Activated CD8-positive, alpha-beta T cell treated with anti-CD3 and anti-CD28 coated beads, Interleukin-2, amount 10 ng/mL, durations not matched to agents 7 days and 5 days (primary cell): ENCODE measurements at regions of chr21 and their contacts with region 1.

Region 1: DNA sequence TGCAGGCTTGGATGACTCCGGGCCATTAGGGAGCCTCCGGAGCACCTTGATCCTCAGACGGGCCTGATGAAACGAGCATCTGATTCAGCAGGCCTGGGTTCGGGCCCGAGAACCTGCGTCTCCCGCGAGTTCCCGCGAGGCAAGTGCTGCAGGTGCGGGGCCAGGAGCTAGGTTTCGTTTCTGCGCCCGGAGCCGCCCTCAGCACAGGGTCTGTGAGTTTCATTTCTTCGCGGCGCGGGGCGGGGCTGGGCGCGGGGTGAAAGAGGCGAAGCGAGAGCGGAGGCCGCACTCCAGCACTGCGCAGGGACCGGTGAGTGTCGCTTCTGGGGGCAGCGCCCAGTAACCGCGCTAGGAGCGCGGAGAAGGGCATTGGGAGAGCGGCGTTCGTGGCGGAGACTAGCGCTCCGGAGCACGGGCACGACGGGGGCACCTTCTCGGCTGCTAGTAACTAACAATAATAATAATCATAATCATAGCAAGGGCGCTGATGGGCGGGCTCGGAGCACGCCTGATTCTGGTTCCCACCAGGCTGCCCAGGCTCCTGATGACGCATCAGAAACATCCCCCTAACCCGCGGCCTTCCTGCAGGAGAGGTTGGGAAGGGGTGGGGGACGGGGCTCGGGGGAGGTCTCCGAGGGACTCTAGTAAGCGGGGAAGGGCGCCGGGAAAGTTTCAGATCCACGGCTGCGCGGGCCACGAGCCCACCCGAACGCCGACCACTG is at the start of gene MX1:
- DNase-seq: peak; percentile 96
- ATAC-seq: peak; percentile 94
- H3K4me3 Mint-ChIP-seq: peak within 1 kb of the TSS; percentile 94
- H3K27ac Mint-ChIP-seq: peak within 1 kb of the TSS; percentile 100
- H3K4me1 Mint-ChIP-seq: peaks cover 83% of the 10 kb centered on the region
- H3K27me3 Mint-ChIP-seq: no peaks in the 10 kb centered on the region
- total RNA-seq, gene MX1: 563 to 584 TPM

Region 2: DNA sequence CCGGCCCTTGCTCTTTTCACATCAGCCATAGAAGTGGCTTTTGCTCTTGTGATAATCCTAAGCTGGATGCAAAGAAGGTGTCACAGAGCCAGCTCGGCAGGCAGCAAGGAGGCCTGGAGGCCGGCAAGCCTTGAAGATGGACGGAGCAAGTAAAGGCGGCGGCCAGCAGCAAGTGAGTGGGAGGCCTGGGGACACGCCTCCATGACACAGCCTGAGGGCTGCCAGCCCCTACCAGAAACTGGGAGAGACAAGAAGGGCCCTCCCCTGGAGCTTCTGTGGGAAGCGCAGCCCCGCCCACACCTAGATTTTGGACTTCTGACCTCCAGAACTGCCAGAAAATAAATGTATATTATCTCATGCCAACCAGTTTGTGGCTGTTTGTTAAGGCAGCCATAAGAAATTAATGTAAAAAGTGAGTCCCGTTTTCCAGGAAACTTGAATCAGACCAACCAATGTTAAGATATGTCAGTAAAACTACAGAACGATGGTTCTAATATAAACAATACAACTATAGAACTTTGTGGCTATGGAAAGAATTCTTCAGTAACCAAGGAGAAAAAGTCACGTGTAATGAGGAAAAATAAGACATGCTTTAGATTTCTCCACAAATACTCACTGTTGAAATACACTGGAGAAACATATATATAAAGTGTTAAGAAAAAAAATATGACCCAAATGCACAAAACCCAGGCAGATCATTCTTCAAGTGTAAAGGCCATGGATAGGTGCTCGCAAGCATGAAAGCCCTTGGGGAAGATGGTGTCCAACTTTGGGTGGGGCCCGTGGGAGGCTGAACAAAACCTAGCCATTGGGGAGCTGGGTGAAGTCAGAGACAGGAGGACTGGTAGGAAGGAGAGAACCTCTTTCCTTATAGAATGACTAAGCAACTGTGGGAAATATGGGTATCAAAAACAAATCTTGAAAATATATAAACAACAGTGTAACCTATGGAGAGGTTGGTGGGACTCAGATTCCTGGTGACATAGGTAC is 208.1 kb before region 1 on chr21:
- CTCF ChIA-PET with region 1: no interaction called
- POLR2A ChIA-PET with region 1: no interaction called
- DNase-seq: no peak
- ATAC-seq: no peak
- H3K4me3 Mint-ChIP-seq: no peak overlapping the region
- H3K27ac Mint-ChIP-seq: no peak overlapping the region
- H3K4me1 Mint-ChIP-seq: peaks cover 2% of the 10 kb centered on the region
- H3K27me3 Mint-ChIP-seq: peaks cover 14% of the 10 kb centered on the region

Region 3: GRCh38 chr21:41361786-41362604 is 64.1 kb before region 1 on chr21 and contains the start of gene MX2:
- CTCF ChIA-PET with region 1: interaction called, 3 read pairs
- POLR2A ChIA-PET with region 1: interaction called, 178 read pairs
- DNase-seq: peak; percentile 91
- ATAC-seq: peak; percentile 84
- H3K4me3 Mint-ChIP-seq: peak within 1 kb of the TSS; percentile 89
- H3K27ac Mint-ChIP-seq: peak within 1 kb of the TSS; percentile 100
- H3K4me1 Mint-ChIP-seq: peaks cover 76% of the 10 kb centered on the region
- H3K27me3 Mint-ChIP-seq: no peaks in the 10 kb centered on the region
- total RNA-seq, gene MX2: 56.0 to 58.6 TPM

Region 4: DNA sequence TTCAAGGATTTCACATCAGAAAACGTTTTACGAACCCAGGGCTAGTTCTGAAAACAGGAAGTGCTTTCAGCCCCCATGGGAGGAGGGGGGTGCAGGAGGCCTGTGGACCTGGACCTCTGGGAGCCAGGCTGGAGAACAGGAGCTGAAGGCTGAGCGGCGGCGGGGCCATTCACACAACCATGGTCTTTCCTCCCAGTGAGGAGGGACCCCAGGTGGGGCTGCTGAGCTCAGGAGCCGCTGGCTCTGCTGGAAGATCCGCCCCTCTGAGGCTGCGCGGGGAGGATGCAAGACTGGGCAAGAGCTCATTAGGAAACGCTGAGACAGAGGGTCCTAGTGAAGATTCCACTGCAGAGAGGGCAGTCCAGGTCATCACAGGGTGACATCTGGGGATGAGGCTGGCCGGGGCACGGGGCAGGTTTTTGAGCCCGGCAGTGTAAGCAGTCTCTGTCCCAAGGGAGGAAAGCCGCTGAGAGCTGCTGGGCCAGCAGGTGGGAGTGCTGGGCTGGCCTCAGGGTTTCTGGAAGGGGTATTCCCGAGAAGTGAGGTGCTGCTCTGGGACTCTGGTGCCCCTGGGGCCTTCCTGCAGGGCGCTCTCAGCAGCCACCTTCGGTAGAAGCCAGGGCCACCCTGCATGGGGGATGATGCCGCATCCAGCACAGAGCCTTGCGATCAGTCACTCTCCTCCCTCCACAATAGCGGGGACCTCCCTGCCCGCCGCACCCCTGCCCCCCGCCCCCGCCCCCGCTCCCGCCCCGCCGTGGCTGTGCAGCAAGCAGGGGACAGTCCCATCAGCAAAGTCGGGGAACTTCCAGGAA is 56.8 kb before region 1 on chr21:
- CTCF ChIA-PET with region 1: interaction called, 3 read pairs
- POLR2A ChIA-PET with region 1: interaction called, 178 read pairs
- DNase-seq: peak; percentile 52
- ATAC-seq: peak; percentile 61
- H3K4me3 Mint-ChIP-seq: peak overlapping the region; percentile 77
- H3K27ac Mint-ChIP-seq: peak overlapping the region; percentile 95
- H3K4me1 Mint-ChIP-seq: peaks cover 77% of the 10 kb centered on the region
- H3K27me3 Mint-ChIP-seq: no peaks in the 10 kb centered on the region

Region 5: GRCh38 chr21:41411449-41412089 is 14.5 kb before region 1 on chr21:
- CTCF ChIA-PET with region 1: interaction called, 5 read pairs
- POLR2A ChIA-PET with region 1: interaction called, 25 read pairs
- DNase-seq: no peak
- ATAC-seq: peak; percentile 53
- H3K4me3 Mint-ChIP-seq: no peak overlapping the region
- H3K27ac Mint-ChIP-seq: no peak overlapping the region
- H3K4me1 Mint-ChIP-seq: peaks cover 14% of the 10 kb centered on the region
- H3K27me3 Mint-ChIP-seq: peaks cover 22% of the 10 kb centered on the region

Region 6: GRCh38 chr21:41439248-41439647 is 13.1 kb after region 1 on chr21:
- CTCF ChIA-PET with region 1: no interaction called
- POLR2A ChIA-PET with region 1: interaction called, 21 read pairs
- DNase-seq: no peak
- ATAC-seq: no peak
- H3K4me3 Mint-ChIP-seq: no peak overlapping the region
- H3K27ac Mint-ChIP-seq: no peak overlapping the region
- H3K4me1 Mint-ChIP-seq: peaks cover 52% of the 10 kb centered on the region
- H3K27me3 Mint-ChIP-seq: no peaks in the 10 kb centered on the region